Activated T-helper 1 cell treated with anti-CD3 and anti-CD28 coated beads, Interleukin-12 subunit alpha, Interleukin-12 subunit beta, Interleukin-2, Interleukin-4 antibody, amounts not matched to agents 30 ng/mL and 10 ng/mL and 1 ng/mL, durations not matched to agents 14 hours and 24 hours and 36 hours (primary cell): ENCODE measurements at regions of chr15 and their contacts with region 1.

Region 1: GRCh38 chr15:43749690-43750345 is 3.6 kb downstream of the PDIA3 start:
- DNase-seq: peak; percentile 49
- H3K4me3 Mint-ChIP-seq: peak overlapping the region; percentile 66
- H3K27ac Mint-ChIP-seq: peak overlapping the region; percentile 78
- H3K4me1 Mint-ChIP-seq: peaks cover 39% of the 10 kb centered on the region
- H3K27me3 Mint-ChIP-seq: no peaks in the 10 kb centered on the region

Region 2: GRCh38 chr15:43440721-43441281 is 309.0 kb before region 1 on chr15:
- intact Hi-C with region 1: loop called (anchors 1 kb)
- DNase-seq: peak; percentile 21
- H3K4me3 Mint-ChIP-seq: peak overlapping the region; percentile 19
- H3K27ac Mint-ChIP-seq: peak overlapping the region; percentile 92
- H3K4me1 Mint-ChIP-seq: peaks cover 10% of the 10 kb centered on the region
- H3K27me3 Mint-ChIP-seq: no peaks in the 10 kb centered on the region

Region 3: DNA sequence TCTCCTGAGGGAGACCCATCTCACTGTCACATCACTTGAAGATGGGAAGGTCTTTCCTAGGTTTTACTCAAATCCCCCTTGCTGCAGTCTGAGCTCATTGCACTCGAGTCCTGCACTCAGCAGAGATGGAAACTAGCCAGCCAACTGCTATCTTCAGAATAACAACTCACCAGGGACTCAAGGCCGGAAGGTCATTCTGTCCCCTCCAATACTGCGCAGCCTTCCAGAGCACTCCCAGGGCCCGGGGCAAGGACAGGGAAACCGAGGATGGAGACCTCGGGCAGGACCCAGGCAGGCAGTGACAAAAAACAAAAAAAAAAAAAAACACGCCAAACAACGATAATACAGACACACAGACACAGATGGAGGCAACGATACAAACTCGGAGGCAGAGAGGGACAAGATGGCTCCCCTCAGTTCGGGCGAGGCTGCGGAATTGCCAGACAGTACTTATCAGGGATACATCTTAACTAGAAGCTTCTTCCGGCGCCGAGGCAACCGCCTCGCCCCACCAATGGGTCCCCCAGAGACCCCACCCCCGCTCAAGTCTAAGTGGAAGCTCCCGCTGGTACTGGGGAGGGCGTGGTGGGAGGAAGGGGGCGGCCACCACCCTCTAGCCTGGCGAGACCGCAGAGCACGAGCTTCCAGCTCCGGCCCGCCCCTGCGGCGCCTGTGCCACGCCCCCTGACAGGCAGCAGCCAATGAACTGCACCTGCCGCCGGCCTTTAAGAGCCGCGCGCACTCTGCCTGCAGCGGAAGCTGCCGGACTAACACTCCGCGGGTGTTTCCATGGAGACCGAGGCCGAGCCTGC is 239.4 kb before region 1 on chr15:
- intact Hi-C with region 1: loop called (anchors 1 kb)
- DNase-seq: peak; percentile 98
- H3K4me3 Mint-ChIP-seq: peak overlapping the region; percentile 87
- H3K27ac Mint-ChIP-seq: peak overlapping the region; percentile 92
- H3K4me1 Mint-ChIP-seq: peaks cover 56% of the 10 kb centered on the region
- H3K27me3 Mint-ChIP-seq: peaks cover 6% of the 10 kb centered on the region

Region 4: GRCh38 chr15:43776718-43777583 is 27.1 kb after region 1 on chr15 and contains the start of gene ELL3:
- intact Hi-C with region 1: loop called (anchors 2 kb)
- DNase-seq: peak; percentile 63
- H3K4me3 Mint-ChIP-seq: peak within 1 kb of the TSS; percentile 82
- H3K27ac Mint-ChIP-seq: peak within 1 kb of the TSS; percentile 83
- H3K4me1 Mint-ChIP-seq: peaks cover 15% of the 10 kb centered on the region
- H3K27me3 Mint-ChIP-seq: peaks cover 6% of the 10 kb centered on the region
- total RNA-seq, gene ELL3: 0.41 and 0.73 TPM in 2 replicates

Region 5: GRCh38 chr15:43800286-43801141 is 50.7 kb after region 1 on chr15 and contains the start of gene HYPK:
- intact Hi-C with region 1: loop called (anchors 2 kb)
- DNase-seq: peak; percentile 89
- H3K4me3 Mint-ChIP-seq: peak within 1 kb of the TSS; percentile 99
- H3K27ac Mint-ChIP-seq: peak within 1 kb of the TSS; percentile 94
- H3K4me1 Mint-ChIP-seq: peaks cover 56% of the 10 kb centered on the region
- H3K27me3 Mint-ChIP-seq: no peaks in the 10 kb centered on the region
- total RNA-seq, gene HYPK: 22.0 TPM in 2 replicates